Testis (tissue), 5 donors: ENCODE measurements at regions of chr16 and their contacts with region 1.

Region 1: DNA sequence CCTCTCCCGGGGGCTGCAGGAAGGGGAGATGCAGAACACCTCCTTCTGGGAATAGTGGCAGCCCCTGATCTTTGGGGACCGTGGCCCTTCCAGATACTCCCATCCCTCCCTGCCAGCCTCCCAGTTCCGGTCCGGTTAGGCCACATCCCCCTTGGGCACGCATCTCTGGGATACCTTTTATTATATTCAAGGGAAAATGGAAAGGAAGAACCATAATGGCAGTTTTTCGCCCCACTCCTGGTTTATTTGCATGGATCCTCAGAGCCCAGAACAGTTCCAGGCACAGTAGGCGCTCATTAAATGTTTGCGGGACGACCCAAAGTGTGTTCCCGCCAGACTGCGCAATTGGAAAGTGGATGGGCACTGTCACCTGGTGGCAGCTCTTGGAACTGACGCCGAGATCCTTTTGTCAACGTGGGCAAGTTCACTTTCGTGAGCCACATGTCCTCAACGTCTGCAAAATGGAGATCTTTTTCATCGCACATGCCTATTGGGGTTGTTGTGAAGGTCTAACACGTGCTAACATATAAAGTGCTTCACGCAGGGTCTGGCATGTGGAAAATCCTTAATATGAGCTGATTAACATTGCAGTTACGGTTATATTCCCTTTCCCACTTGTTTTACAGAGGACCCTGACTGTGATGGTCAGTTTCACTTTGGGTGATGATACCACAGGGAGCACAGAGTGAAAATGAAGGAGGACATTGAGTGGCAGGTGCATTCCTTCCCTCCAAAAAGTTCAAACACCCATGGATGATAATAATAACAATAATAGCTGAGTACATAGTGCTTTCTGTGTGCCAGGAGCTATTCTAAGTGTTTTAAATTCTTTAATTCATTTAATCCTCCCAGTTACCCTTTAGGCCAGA is 1.7 kb upstream of the GPRC5B start:
- DNase-seq: peak; percentile 90
- H3K4me3 ChIP-seq: peak overlapping the region in 1 of 2 donors; percentile 93
- H3K27ac ChIP-seq: no peak overlapping the region
- H3K4me1 ChIP-seq: peaks cover 22% of the 10 kb centered on the region
- H3K27me3 ChIP-seq: no peaks in the 10 kb centered on the region
- CTCF ChIP-seq: peak; percentile 99 to 100 (median 99)
- POLR2A ChIP-seq: no peak

Region 2: GRCh38 chr16:19601083-19601976 is 285.0 kb before region 1 on chr16:
- intact Hi-C with region 1: loop called (anchors 5 kb)
- DNase-seq: peak; percentile 62
- H3K4me3 ChIP-seq: no peak overlapping the region
- H3K27ac ChIP-seq: no peak overlapping the region
- H3K4me1 ChIP-seq: peaks cover 9% of the 10 kb centered on the region
- H3K27me3 ChIP-seq: no peaks in the 10 kb centered on the region
- CTCF ChIP-seq: peak; percentile 68 to 86 (median 79)
- POLR2A ChIP-seq: no peak

Region 3: GRCh38 chr16:19728636-19728965 is 157.7 kb before region 1 on chr16:
- intact Hi-C with region 1: no loop called
- DNase-seq: no peak
- H3K4me3 ChIP-seq: no peak overlapping the region
- H3K27ac ChIP-seq: no peak overlapping the region
- H3K4me1 ChIP-seq: no peaks in the 10 kb centered on the region
- H3K27me3 ChIP-seq: no peaks in the 10 kb centered on the region
- CTCF ChIP-seq: no peak
- POLR2A ChIP-seq: no peak